H1 (cell line): ENCODE measurements at regions of chr3 and their contacts with region 1.

Region 1: DNA sequence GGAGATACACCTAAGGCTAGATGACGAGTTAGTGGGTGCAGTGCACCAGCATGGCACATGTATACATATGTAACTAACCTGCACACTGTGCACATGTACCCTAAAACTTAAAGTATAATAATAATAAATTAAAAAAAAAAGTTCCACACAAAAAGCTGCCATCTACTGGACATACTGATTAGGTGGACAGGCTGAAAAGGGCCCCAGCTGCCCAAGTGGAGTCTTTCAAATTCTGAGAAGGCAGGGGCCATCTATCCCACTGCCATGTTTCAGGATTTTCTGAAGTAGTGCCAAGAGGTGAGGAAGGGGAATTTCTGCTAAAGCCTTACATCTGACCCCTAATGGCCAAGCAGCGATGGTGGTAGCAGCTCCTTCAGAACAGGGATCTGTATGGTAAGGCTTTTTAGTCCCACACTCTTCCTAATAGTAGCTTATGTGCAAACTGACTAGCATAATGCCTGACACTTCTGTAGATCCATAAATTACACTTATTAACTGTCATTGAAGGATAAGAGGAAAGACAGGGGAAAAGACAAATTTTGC is 7.7 kb downstream of the FSTL1 start:
- DNase-seq: no peak
- H3K4me3 ChIP-seq: no peak overlapping the region
- H3K27ac ChIP-seq: no peak overlapping the region
- H3K4me1 ChIP-seq: peaks cover 0 to 9% (median 3%) of the 10 kb centered on the region in 4 experiments; a peak in 3 of 7 replicates
- H3K27me3 ChIP-seq: no peaks in the 10 kb centered on the region
- CTCF ChIP-seq: peak in 2 of 3 experiments; percentile 55 to 62; a peak in 3 of 4 replicates
- EP300 ChIP-seq: no peak
- POLR2A ChIP-seq: no peak
- RAD21 ChIP-seq: peak in 1 of 2 experiments; percentile 49; a peak in 2 of 4 replicates

Region 2: DNA sequence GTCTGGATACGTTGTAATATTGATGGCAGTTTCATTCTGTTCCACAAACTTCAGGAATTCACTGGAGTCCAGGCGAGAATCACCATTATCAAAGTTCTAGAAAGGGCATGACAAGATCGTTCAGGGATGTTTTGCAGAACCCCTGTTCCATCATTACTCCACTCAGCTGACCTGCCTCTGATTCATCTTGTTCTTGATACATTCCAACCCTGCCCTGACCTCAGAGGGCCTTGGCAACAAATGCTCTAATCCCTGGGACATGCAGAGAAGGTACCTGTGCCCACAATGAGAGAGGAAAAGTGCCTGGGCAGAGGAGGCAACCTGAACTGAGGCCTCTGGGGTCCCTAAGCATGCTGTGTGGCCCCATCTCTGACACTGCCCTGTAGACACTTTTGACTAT is 38.2 kb before region 1 on chr3:
- CTCF ChIA-PET with region 1: no interaction called
- POLR2A ChIA-PET with region 1: no interaction called
- DNase-seq: no peak
- H3K4me3 ChIP-seq: no peak overlapping the region
- H3K27ac ChIP-seq: no peak overlapping the region
- H3K4me1 ChIP-seq: no peaks in the 10 kb centered on the region
- H3K27me3 ChIP-seq: no peaks in the 10 kb centered on the region
- CTCF ChIP-seq: no peak
- EP300 ChIP-seq: no peak
- POLR2A ChIP-seq: no peak
- RAD21 ChIP-seq: no peak

Region 3: DNA sequence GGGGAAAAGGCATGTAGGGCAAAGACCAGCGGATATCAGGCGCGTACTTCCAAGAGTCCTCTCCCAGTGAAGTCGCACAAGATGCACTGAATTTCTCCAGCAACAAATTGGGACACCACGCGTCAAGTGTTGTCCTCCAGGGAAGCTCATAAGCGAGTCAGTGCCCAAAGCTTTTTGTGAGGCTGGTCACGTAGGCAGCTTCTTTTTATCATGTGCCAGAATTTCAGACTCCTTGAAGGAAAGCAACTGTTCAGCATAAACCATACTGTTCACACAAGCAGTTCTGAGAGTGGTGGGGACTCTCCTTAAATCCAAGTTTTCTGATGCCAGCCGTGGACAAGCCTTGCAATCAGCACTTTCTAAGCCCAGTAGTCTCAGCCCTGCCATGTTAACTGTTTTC is 17.8 kb after region 1 on chr3:
- CTCF ChIA-PET with region 1: interaction called, 11 read pairs
- POLR2A ChIA-PET with region 1: interaction called, 6 read pairs
- DNase-seq: no peak
- H3K4me3 ChIP-seq: no peak overlapping the region
- H3K27ac ChIP-seq: no peak overlapping the region
- H3K4me1 ChIP-seq: peaks cover 0 to 11% (median 2%) of the 10 kb centered on the region in 4 experiments; a peak in 2 of 7 replicates
- H3K27me3 ChIP-seq: 0 out of 7 replicates have a peak, but pooled peaks cover 0 to 3% (median 0%) of the 10 kb centered on the region in 4 experiments
- CTCF ChIP-seq: no peak
- EP300 ChIP-seq: no peak
- POLR2A ChIP-seq: no peak
- RAD21 ChIP-seq: no peak

Region 4: DNA sequence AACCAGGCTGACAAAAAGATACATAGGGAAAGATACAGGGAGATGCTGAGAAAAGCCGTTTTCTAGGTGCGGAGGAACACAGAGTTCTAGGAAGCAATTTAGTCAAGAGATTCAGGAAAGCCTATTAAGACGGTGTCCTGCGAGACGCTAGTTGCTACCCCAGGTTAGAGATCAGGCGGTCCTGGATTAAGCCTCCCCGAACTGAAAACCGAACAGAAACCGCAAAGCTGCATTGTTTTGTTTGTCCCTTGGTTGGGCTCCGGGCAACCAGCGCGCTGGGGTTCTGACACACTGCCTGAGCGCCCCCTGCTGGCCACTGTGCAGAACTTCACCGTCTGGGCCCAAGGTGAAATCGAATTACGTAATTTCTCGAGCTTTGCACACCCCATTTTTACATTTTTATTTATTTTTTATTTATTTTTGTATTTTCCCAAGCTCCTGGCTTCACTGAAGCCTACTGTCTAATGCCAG is 115.8 kb after region 1 on chr3:
- CTCF ChIA-PET with region 1: interaction called, 20 read pairs
- POLR2A ChIA-PET with region 1: interaction called, 4 read pairs
- DNase-seq: peak in 1 of 2 experiments; percentile 92
- H3K4me3 ChIP-seq: peak overlapping the region; percentile 73 to 81 (median 76); a peak in 7 of 8 replicates
- H3K27ac ChIP-seq: no peak overlapping the region
- H3K4me1 ChIP-seq: peaks cover 4 to 13% (median 6%) of the 10 kb centered on the region in 4 experiments; a peak in 6 of 7 replicates
- H3K27me3 ChIP-seq: peaks cover 0 to 3% (median 0%) of the 10 kb centered on the region in 4 experiments; a peak in 2 of 7 replicates
- CTCF ChIP-seq: peak; percentile 83 to 90 (median 86)
- EP300 ChIP-seq: peak in 1 of 2 experiments; percentile 76; a peak in 1 of 3 replicates
- POLR2A ChIP-seq: peak in 1 of 2 experiments; percentile 52; a peak in 2 of 3 replicates
- RAD21 ChIP-seq: peak; percentile 96 to 98